ENCODE measurements at regions of chr3 and their contacts with region 1.

Region 1: GRCh38 chr3:159884661-159885402 is 103.8 kb upstream of the IL12A start:
- DNase-seq: peak in 1 of 2 donors; percentile 65
- H3K4me3 ChIP-seq: no peak overlapping the region
- H3K27ac ChIP-seq: peak overlapping the region in 1 of 5 donors; percentile 78
- H3K4me1 ChIP-seq: peaks cover 0 to 44% (median 22%) of the 10 kb centered on the region in 4 donors
- H3K27me3 ChIP-seq: no peaks in the 10 kb centered on the region
- CTCF ChIP-seq: peak in 5 of 7 experiments; percentile 27 to 46 (median 31)
- EP300 ChIP-seq: no peak
- POLR2A ChIP-seq: no peak

Region 2: GRCh38 chr3:160006282-160007163 is 121.7 kb after region 1 on chr3:
- intact Hi-C with region 1: loop called (anchors 5 kb)
- DNase-seq: peak; percentile 47 to 82
- H3K4me3 ChIP-seq: no peak overlapping the region
- H3K27ac ChIP-seq: no peak overlapping the region
- H3K4me1 ChIP-seq: peaks cover 0 to 9% (median 3%) of the 10 kb centered on the region in 4 donors
- H3K27me3 ChIP-seq: no peaks in the 10 kb centered on the region
- CTCF ChIP-seq: peak in 5 of 7 experiments; percentile 30 to 76 (median 64)
- EP300 ChIP-seq: no peak
- POLR2A ChIP-seq: no peak